Right cardiac atrium (tissue), 5 donors: ENCODE measurements at regions of chr11 and their contacts with region 1.

Region 1: DNA sequence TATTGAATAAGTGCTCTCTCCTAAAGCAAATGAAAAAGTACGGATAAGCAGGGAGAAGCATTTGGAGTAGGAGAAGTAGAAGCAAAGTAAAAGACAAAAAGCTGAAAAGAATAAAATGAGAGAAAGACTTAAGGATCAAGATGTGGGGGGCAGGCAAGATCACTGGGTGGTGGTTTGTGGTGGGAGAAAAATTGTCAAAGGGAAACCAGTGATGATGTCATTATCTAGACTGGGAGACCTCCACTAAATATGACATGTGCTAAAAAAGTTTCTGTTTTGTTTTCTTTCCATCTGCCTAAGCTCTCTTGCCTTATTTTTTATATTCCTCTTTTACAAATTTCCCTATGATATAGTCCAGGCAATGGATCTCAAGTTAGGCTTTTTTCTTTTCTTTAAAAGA is 14.8 kb upstream of the MAML2 start:
- DNase-seq: no peak
- ATAC-seq: no peak
- H3K4me3 ChIP-seq: no peak overlapping the region
- H3K27ac ChIP-seq: no peak overlapping the region
- H3K4me1 ChIP-seq: no peaks in the 10 kb centered on the region
- H3K27me3 ChIP-seq: no peaks in the 10 kb centered on the region

Region 2: GRCh38 chr11:95849087-95849825 is 508.5 kb before region 1 on chr11:
- intact Hi-C with region 1: loop called in 1 of 4 experiments (anchors 10 kb)
- DNase-seq: peak; percentile 37 to 64 (median 40)
- ATAC-seq: peak; percentile 84 to 93
- H3K4me3 ChIP-seq: no peak overlapping the region
- H3K27ac ChIP-seq: no peak overlapping the region
- H3K4me1 ChIP-seq: peaks cover 2% of the 10 kb centered on the region
- H3K27me3 ChIP-seq: no peaks in the 10 kb centered on the region

Region 3: GRCh38 chr11:96188243-96189006 is 169.4 kb before region 1 on chr11:
- intact Hi-C with region 1: no loop called
- DNase-seq: no peak
- ATAC-seq: peak; percentile 52 to 55
- H3K4me3 ChIP-seq: no peak overlapping the region
- H3K27ac ChIP-seq: no peak overlapping the region
- H3K4me1 ChIP-seq: peaks cover 6% of the 10 kb centered on the region
- H3K27me3 ChIP-seq: no peaks in the 10 kb centered on the region